GM12878 (cell line): ENCODE measurements at regions of chr13 and their contacts with region 1.

Region 1: GRCh38 chr13:48334534-48335127 is 31.1 kb downstream of the RB1 start:
- DNase-seq: peak; percentile 24
- ATAC-seq: peak; percentile 86
- H3K4me3 ChIP-seq: no peak overlapping the region
- H3K27ac ChIP-seq: no peak overlapping the region
- H3K4me1 ChIP-seq: no peaks in the 10 kb centered on the region; the same call in 1 of the 2 replicates
- H3K27me3 ChIP-seq: no peaks in the 10 kb centered on the region
- CTCF ChIP-seq: peak; percentile 44 to 60 (median 50); a peak in 5 of 6 replicates
- EP300 ChIP-seq: no peak
- POLR2A ChIP-seq: no peak
- RAD21 ChIP-seq: peak; percentile 92

Region 2: DNA sequence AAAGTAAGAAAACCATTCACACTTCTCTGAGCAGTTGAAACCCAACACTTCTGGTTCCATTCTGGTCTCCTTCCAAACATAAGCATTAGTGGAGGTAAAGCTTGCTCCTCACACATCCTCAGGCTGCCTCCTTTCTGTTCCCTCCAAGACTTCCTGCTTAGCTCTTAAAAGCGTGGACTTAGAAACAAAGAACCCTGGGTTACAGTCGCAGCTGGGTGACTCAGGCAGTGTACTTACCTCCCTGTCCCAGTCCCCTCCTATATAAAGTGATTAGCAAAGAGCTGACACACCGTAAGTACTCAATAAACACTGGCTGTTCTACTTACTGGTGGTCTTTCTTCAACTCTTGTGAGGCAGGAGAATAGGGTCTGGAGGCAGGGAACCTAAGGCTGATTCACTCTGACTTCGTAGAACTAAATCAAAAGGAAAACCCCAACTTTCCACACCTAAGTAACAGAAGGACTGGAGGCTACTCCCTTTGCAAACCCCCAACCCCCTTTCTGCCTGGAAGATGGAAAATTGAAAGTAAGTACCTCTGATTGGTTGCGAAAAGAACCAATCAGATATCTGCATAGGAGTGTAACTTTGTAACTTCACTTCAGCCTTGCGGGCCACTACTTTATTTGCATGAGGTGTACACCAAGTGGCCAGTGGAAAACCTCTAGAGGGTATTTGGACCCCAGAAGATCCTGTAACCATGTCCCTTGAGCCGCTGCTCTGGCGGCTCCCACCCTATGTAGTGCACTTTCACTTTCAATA is 499.0 kb before region 1 on chr13:
- CTCF ChIA-PET with region 1: no interaction called
- POLR2A ChIA-PET with region 1: no interaction called
- RAD21 ChIA-PET with region 1: no interaction called
- SMC1A ChIA-PET with region 1: no interaction called
- in situ Hi-C with region 1: no loop called
- intact Hi-C with region 1: no loop called
- DNase-seq: no peak
- ATAC-seq: peak; percentile 62
- H3K4me3 ChIP-seq: peak overlapping the region; percentile 48; the same call in 1 of the 2 replicates
- H3K27ac ChIP-seq: no peak overlapping the region
- H3K4me1 ChIP-seq: no peaks in the 10 kb centered on the region
- H3K27me3 ChIP-seq: no peaks in the 10 kb centered on the region
- CTCF ChIP-seq: no peak
- EP300 ChIP-seq: no peak
- POLR2A ChIP-seq: no peak
- RAD21 ChIP-seq: no peak

Region 3: DNA sequence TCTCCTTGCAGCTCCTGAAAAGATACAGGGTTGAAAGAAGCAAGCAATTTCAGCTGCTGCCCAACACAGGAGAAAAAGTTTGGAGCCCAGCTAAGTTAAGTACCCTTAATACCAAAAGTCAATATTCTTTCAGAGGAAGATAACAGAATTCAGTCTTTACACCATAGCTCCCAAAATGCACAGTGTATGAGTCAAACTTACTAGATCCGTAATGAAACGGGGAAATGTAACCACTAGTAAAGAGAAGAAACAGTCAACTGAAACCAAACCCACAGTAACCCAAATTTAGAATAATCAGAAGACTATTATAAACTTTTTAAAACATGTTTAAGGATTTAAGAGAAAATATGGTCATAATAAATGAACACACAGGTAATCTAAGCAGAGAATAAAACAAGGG is 378.8 kb before region 1 on chr13:
- CTCF ChIA-PET with region 1: no interaction called
- POLR2A ChIA-PET with region 1: no interaction called
- RAD21 ChIA-PET with region 1: no interaction called
- SMC1A ChIA-PET with region 1: no interaction called
- in situ Hi-C with region 1: no loop called
- intact Hi-C with region 1: no loop called
- DNase-seq: no peak
- ATAC-seq: peak; percentile 58
- H3K4me3 ChIP-seq: no peak overlapping the region
- H3K27ac ChIP-seq: no peak overlapping the region
- H3K4me1 ChIP-seq: no peaks in the 10 kb centered on the region
- H3K27me3 ChIP-seq: no peaks in the 10 kb centered on the region
- CTCF ChIP-seq: no peak
- EP300 ChIP-seq: no peak
- POLR2A ChIP-seq: no peak
- RAD21 ChIP-seq: no peak

Region 4: GRCh38 chr13:48318821-48319511 is 15.7 kb before region 1 on chr13:
- CTCF ChIA-PET with region 1: interaction called, 11 read pairs
- POLR2A ChIA-PET with region 1: no interaction called
- RAD21 ChIA-PET with region 1: interaction called, 3 read pairs
- SMC1A ChIA-PET with region 1: interaction called, 13 read pairs
- in situ Hi-C with region 1: no loop called
- intact Hi-C with region 1: no loop called
- DNase-seq: no peak
- ATAC-seq: no peak
- H3K4me3 ChIP-seq: no peak overlapping the region
- H3K27ac ChIP-seq: no peak overlapping the region
- H3K4me1 ChIP-seq: no peaks in the 10 kb centered on the region
- H3K27me3 ChIP-seq: peaks cover 0 to 2% of the 10 kb centered on the region in 2 experiments; a peak in 1 of 4 replicates
- CTCF ChIP-seq: no peak
- EP300 ChIP-seq: no peak
- POLR2A ChIP-seq: no peak
- RAD21 ChIP-seq: no peak

Region 5: DNA sequence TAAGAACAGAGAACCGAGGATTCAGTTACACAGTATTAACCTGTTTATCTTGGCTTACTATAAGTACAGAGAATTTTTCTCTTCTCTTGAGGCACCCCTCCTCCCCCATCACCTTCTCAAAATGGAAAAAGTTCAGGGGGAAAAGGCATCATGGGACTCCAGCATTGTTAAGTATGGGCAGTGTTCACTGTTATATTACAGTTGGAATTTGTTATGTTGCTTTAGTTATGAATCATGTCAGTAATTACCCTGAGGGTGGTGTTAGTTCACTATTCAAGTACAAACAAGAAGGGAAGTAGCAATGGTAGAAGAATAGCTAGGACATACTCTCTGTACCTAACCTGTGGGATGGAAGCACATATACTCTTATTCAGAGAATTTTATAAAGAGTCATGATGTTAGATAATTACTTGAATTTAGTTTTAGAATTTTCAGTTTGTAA is 66.2 kb after region 1 on chr13:
- CTCF ChIA-PET with region 1: interaction called, 10 read pairs
- POLR2A ChIA-PET with region 1: no interaction called
- RAD21 ChIA-PET with region 1: interaction called, 5 read pairs
- SMC1A ChIA-PET with region 1: interaction called, 4 read pairs
- in situ Hi-C with region 1: no loop called
- intact Hi-C with region 1: no loop called
- DNase-seq: peak; percentile 25
- ATAC-seq: peak; percentile 73
- H3K4me3 ChIP-seq: no peak overlapping the region
- H3K27ac ChIP-seq: peak overlapping the region; percentile 0; the same call in 1 of the 2 replicates
- H3K4me1 ChIP-seq: peaks cover 25% of the 10 kb centered on the region; the same call in 1 of the 2 replicates
- H3K27me3 ChIP-seq: no peaks in the 10 kb centered on the region
- CTCF ChIP-seq: peak; percentile 2 to 44 (median 14); a peak in 1 of 6 replicates
- EP300 ChIP-seq: no peak
- POLR2A ChIP-seq: no peak
- RAD21 ChIP-seq: peak; percentile 35

Region 6: GRCh38 chr13:48731957-48732569 is 397.4 kb after region 1 on chr13:
- CTCF ChIA-PET with region 1: interaction called, 13 read pairs
- POLR2A ChIA-PET with region 1: no interaction called
- RAD21 ChIA-PET with region 1: interaction called, 3 read pairs
- SMC1A ChIA-PET with region 1: interaction called, 4 read pairs
- in situ Hi-C with region 1: no loop called
- intact Hi-C with region 1: loop called (anchors 5 kb)
- DNase-seq: no peak
- ATAC-seq: peak; percentile 91
- H3K4me3 ChIP-seq: no peak overlapping the region
- H3K27ac ChIP-seq: no peak overlapping the region
- H3K4me1 ChIP-seq: no peaks in the 10 kb centered on the region
- H3K27me3 ChIP-seq: no peaks in the 10 kb centered on the region; a peak in 1 of 4 replicates
- CTCF ChIP-seq: peak; percentile 59 to 87 (median 81)
- EP300 ChIP-seq: no peak
- POLR2A ChIP-seq: no peak
- RAD21 ChIP-seq: peak; percentile 36; the same call in 1 of the 2 replicates